Esophagus muscularis mucosa (tissue), 4 donors: ENCODE measurements at regions of chr6 and their contacts with region 1.

Region 1: DNA sequence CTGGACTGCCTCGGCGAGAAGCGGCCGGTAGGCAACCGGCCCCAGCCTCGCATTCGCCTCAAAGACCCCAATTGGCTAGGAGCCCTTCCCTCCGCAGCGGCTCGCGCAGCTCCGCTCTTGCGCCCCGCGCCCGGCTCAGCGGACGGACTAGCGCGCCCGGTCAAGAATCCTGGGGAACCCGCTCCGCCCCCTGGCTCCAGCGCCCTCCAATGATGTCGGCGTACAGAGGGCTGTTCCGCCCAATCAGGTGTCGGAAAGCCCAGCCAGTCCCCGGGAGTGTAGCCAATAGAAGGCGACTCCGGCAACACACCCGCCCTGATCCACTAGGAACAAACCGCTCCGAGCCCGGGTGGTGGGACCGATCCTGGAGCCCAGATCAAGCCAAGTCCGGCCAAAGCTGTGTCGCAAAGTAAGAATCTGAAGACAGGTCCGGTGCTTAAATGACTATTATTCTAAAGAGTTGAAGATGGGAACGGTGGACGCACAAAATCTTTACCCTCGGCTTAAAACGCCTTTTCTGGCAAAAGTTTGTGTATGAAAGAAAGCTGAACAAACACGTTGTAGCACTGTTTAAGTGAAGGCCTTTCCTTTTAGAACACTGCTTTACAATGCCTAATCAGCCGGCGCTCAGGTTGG is 132.2 kb downstream of the OGFRL1 start:
- DNase-seq: peak; percentile 98
- H3K4me3 ChIP-seq: peak overlapping the region; percentile 88 to 98 (median 94)
- H3K27ac ChIP-seq: peak overlapping the region; percentile 97 to 99 (median 98)
- H3K4me1 ChIP-seq: peaks cover 16 to 37% (median 30%) of the 10 kb centered on the region in 4 donors
- H3K27me3 ChIP-seq: no peaks in the 10 kb centered on the region
- CTCF ChIP-seq: no peak
- EP300 ChIP-seq: no peak
- POLR2A ChIP-seq: peak; percentile 90

Region 2: DNA sequence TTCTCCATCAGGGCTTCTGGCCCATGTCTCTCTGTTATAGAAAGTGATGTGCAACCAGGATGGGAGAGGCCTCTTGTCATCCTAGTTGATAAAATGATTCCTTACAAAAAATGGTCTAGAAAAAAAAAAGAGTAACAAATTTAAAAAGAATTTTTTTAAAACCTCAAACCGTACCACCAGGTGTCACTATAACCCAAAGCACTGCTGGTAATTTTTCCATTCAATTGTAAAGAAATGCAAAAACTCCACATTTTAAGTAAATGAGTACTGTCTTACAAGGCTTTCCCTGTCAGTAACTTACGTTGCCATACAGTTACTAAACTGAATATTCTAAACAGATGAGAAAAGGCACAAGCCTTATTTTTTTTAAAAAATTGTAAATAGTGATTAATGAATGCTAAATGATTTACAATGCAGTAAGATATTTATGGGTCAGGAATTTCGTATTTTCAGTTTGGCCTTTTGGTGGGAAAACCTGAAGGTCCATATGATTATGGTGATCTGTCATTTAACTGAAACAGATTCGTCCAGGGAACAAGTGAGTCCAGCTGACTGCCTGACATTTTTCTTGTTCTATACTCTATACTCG is 36.8 kb before region 1 on chr6:
- intact Hi-C with region 1: loop called (anchors 5 kb)
- DNase-seq: no peak
- H3K4me3 ChIP-seq: no peak overlapping the region
- H3K27ac ChIP-seq: peak overlapping the region in 2 of 4 donors; percentile 30 to 40
- H3K4me1 ChIP-seq: peaks cover 28 to 58% (median 54%) of the 10 kb centered on the region in 4 donors
- H3K27me3 ChIP-seq: no peaks in the 10 kb centered on the region
- CTCF ChIP-seq: peak; percentile 49 to 77 (median 67)
- EP300 ChIP-seq: no peak
- POLR2A ChIP-seq: no peak

Region 3: DNA sequence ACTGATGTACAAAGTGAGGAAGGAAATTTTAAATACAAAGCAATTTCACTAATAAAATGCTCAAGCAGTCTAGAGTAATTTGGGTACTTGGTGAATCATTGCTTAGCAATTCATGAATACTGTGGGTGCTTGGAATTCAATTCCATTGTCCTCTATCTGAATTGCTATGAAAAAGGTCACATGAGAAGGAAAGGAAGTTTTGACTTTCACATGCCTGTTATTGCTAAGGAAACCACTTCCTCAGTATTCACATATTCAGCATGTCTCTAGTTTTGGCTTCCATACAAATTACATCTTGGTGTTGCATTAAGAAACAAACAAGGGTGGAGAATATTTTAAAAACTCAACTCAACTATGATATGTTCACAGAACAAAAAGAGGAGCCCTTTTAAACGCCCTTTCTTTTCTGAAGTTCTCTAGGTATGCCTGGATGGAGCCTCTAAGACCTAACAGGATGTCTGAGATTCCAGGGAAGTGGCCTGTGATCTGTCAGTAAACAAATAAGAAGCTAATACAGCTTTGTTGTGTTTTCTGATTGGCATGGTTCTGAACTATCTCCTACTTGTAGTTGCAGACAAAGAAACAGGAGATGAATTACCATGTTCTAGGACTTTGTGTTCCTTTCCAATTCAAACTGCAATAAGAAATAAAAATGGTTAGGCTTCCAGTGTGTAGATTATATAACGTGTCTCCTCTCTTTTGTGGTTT is 58.2 kb after region 1 on chr6:
- intact Hi-C with region 1: loop called (anchors 5 kb)
- DNase-seq: no peak
- H3K4me3 ChIP-seq: no peak overlapping the region
- H3K27ac ChIP-seq: peak overlapping the region; percentile 64 to 74 (median 70)
- H3K4me1 ChIP-seq: peaks cover 20 to 47% (median 32%) of the 10 kb centered on the region in 4 donors
- H3K27me3 ChIP-seq: no peaks in the 10 kb centered on the region
- CTCF ChIP-seq: no peak
- EP300 ChIP-seq: no peak
- POLR2A ChIP-seq: no peak

Region 4: DNA sequence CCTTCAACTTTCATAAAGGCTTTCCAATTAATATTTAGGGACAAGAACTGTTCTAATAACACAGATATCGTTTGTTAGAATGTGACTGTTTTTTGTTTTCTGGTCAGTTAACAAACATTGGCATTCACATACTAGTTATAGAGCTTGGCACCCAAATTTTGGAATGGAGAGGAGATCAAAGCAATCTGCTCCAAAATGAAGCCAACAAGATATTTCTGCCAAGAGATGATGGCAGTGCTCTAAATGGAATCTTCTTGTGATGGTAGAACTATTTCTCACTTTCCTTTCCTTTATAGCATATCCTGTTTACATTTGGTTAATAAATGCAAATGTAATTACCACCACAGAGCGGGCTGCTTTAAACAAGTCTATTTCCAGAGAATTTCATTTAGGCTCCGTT is 257.3 kb after region 1 on chr6:
- intact Hi-C with region 1: no loop called
- DNase-seq: no peak
- H3K4me3 ChIP-seq: no peak overlapping the region
- H3K27ac ChIP-seq: no peak overlapping the region
- H3K4me1 ChIP-seq: no peaks in the 10 kb centered on the region
- H3K27me3 ChIP-seq: no peaks in the 10 kb centered on the region
- CTCF ChIP-seq: no peak
- EP300 ChIP-seq: no peak
- POLR2A ChIP-seq: no peak